ENCODE measurements at regions of chr1 and their contacts with region 1.

Region 1: GRCh38 chr1:219660666-219661463 is 48.0 kb upstream of the ZC3H11B start:
- DNase-seq: peak; percentile 86 to 95 (median 87)
- ATAC-seq: peak; percentile 96
- H3K4me3 ChIP-seq: peak overlapping the region in 1 of 2 donors; percentile 4
- H3K27ac ChIP-seq: no peak overlapping the region
- H3K4me1 ChIP-seq: peaks cover 0 to 11% of the 10 kb centered on the region in 2 donors
- H3K27me3 ChIP-seq: peaks cover 0 to 5% of the 10 kb centered on the region in 2 donors
- CTCF ChIP-seq: peak; percentile 61 to 80

Region 2: DNA sequence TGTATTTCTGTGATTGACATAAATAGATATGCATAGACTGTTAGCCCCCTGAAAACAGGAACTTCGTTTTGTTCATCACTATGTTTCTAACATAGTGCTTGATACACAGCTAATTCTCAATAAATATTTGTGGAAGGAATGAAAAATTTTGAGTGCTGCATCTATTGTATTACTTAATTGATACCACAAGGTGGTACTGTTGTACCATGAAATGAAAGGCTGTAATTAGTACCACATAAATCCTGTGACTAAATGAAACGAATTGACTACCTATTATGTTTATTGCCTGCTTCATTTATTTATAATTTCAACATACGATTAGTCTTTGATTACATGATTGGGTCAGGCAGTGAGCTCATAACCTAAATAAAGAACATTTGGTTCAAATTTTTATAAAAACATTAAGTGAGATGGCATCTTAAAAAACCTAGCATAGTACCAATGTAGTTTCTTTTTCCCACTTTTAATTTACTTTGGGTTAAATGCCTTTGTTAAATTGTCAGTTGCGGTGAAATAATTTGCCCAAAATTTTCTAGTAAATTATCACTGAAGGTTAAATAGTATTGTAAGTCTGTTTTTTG is 1330.7 kb before region 1 on chr1:
- intact Hi-C with region 1: loop called in 1 of 2 experiments (anchors 10 kb)
- DNase-seq: peak in 2 of 4 donors; percentile 42 to 61
- ATAC-seq: peak; percentile 82
- H3K4me3 ChIP-seq: no peak overlapping the region
- H3K27ac ChIP-seq: no peak overlapping the region
- H3K4me1 ChIP-seq: no peaks in the 10 kb centered on the region
- H3K27me3 ChIP-seq: no peaks in the 10 kb centered on the region
- CTCF ChIP-seq: peak; percentile 58 to 62

Region 3: DNA sequence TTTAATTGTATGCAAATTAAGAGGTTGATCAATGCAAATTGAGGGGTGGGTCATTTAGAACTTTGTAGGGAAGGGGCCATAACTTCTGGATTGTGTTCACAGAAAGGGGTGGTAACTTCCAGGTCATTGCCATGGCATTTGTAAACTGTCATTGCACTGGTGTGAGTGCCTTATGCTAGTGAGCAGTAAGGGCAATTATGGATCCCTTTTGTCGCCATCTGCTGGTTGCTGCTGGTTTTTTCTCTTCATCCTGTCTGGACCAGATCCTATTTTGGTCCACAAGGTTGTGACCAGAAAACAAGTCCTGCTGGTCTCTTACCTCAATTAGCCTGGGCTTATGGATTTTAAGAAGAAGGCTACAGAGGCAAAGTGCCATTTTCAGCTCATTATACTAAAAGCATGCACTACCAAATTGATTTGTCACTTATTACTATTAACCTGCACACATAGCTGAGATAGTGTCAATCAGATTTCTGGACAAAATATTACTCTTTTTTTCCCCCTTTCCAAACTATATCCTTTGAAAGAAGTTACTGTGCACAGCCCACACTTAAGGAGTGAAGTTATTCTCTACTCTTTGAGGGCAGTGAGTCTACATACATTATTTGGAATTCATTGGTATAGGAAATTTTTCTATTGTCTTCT is 244.1 kb before region 1 on chr1:
- intact Hi-C with region 1: no loop called
- DNase-seq: no peak
- ATAC-seq: peak; percentile 86
- H3K4me3 ChIP-seq: no peak overlapping the region
- H3K27ac ChIP-seq: no peak overlapping the region
- H3K4me1 ChIP-seq: no peaks in the 10 kb centered on the region
- H3K27me3 ChIP-seq: no peaks in the 10 kb centered on the region
- CTCF ChIP-seq: peak; percentile 55 to 66

Region 4: GRCh38 chr1:220123889-220124288 is 463.0 kb after region 1 on chr1:
- intact Hi-C with region 1: no loop called
- DNase-seq: no peak
- ATAC-seq: no peak
- H3K4me3 ChIP-seq: no peak overlapping the region
- H3K27ac ChIP-seq: no peak overlapping the region
- H3K4me1 ChIP-seq: no peaks in the 10 kb centered on the region
- H3K27me3 ChIP-seq: no peaks in the 10 kb centered on the region
- CTCF ChIP-seq: peak in 1 of 2 donors; percentile 11